Left ventricle myocardium superior (tissue), 1 donor: ENCODE measurements at regions of chr2 and their contacts with region 1.

Region 1: DNA sequence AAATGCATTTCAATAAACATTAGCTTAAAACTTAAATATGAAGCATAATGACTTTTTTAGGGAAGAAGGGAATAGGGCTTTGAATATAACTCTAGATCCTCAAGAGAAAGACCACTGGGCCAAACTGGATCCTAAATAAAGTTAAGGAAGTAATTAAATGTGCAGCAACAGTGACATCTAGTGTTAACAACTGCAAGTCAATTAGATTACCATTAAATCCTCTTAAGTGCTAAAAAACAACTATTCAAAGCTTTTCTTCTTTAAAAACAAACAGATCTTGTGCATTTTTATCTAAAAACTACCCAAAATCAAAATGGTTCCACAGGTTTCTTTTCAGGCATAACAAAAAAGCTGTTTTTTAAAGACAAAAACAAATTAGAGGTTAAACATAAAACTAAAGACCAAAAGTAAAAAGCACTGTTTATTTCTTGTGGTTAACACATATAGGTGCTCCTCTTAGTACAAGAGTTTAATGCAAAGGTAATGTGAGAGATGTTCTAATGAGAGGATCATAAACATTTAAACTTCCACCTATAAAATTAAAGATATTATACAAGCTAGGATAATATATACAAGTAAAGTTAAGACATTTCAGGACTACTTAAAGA is 111.4 kb downstream of the THADA start:
- DNase-seq: no peak
- ATAC-seq: peak; percentile 55

Region 2: GRCh38 chr2:42944779-42945415 is 539.5 kb before region 1 on chr2:
- intact Hi-C with region 1: loop called (anchors 10 kb)
- DNase-seq: no peak
- ATAC-seq: no peak

Region 3: GRCh38 chr2:43024515-43025011 is 459.9 kb before region 1 on chr2:
- intact Hi-C with region 1: loop called (anchors 10 kb)
- DNase-seq: peak; percentile 80
- ATAC-seq: peak; percentile 78

Region 4: GRCh38 chr2:43131024-43131889 is 353.2 kb before region 1 on chr2:
- intact Hi-C with region 1: loop called (anchors 10 kb)
- DNase-seq: peak; percentile 78
- ATAC-seq: peak; percentile 63